ENCODE measurements at regions of chr1 and their contacts with region 1.

Region 1: GRCh38 chr1:151443846-151444782 is 15.2 kb downstream of the POGZ start:
- DNase-seq: no peak
- H3K4me3 ChIP-seq: no peak overlapping the region
- H3K27ac ChIP-seq: peak overlapping the region in 3 of 4 donors; percentile 44 to 57 (median 51)
- H3K4me1 ChIP-seq: peaks cover 0 to 65% (median 46%) of the 10 kb centered on the region in 4 donors
- H3K27me3 ChIP-seq: no peaks in the 10 kb centered on the region
- CTCF ChIP-seq: peak; percentile 27 to 74 (median 59)
- EP300 ChIP-seq: no peak
- POLR2A ChIP-seq: no peak

Region 2: GRCh38 chr1:151367658-151368392 is 76.3 kb before region 1 on chr1:
- intact Hi-C with region 1: no loop called
- DNase-seq: no peak
- H3K4me3 ChIP-seq: no peak overlapping the region
- H3K27ac ChIP-seq: peak overlapping the region in 1 of 4 donors; percentile 43
- H3K4me1 ChIP-seq: peaks cover 0 to 43% (median 32%) of the 10 kb centered on the region in 4 donors
- H3K27me3 ChIP-seq: no peaks in the 10 kb centered on the region
- CTCF ChIP-seq: no peak
- EP300 ChIP-seq: no peak
- POLR2A ChIP-seq: no peak

Region 3: GRCh38 chr1:151510957-151511635 is 67.0 kb after region 1 on chr1 and contains the start of gene CGN:
- intact Hi-C with region 1: loop called (anchors 2 kb)
- DNase-seq: peak; percentile 92
- H3K4me3 ChIP-seq: peak within 1 kb of the TSS; percentile 54 to 73 (median 63)
- H3K27ac ChIP-seq: peak within 1 kb of the TSS; percentile 59 to 84 (median 82)
- H3K4me1 ChIP-seq: peaks cover 0 to 17% (median 12%) of the 10 kb centered on the region in 4 donors
- H3K27me3 ChIP-seq: no peaks in the 10 kb centered on the region
- CTCF ChIP-seq: no peak
- EP300 ChIP-seq: no peak
- POLR2A ChIP-seq: peak in 1 of 2 donors; percentile 46
- total RNA-seq, gene CGN: 0.33 to 1.8 (median 0.62) TPM

Region 4: DNA sequence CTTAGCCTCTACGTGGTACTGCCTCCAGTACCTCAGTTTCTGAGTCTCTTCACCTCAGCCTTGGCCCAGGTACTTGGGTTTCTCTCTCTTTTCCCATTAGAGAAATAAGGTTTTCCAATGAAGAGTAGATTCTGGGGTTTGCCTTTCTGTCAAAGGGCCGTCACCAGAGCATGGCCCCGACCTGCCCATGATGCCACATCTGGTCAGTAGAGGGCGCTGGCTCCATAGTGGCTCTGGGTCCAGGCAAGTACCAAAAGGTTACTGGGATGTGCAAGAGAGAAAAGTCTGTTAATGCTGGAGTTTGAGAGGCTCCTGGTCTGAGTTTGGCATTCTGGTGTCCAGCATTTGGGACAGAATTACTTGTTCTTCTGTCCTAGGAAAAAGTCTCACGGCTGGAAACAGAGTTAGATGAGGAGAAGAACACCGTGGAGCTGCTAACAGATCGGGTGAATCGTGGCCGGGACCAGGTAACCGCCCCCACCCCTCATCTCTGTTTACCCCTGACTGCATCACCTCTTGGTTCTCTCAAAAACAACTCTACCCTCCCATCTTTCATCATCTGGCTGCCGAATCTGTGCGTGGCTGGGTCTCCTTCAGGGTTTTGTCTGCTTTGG is 90.7 kb after region 1 on chr1:
- intact Hi-C with region 1: loop called (anchors 2 kb)
- DNase-seq: peak; percentile 82
- H3K4me3 ChIP-seq: no peak overlapping the region
- H3K27ac ChIP-seq: no peak overlapping the region
- H3K4me1 ChIP-seq: peaks cover 0 to 7% (median 6%) of the 10 kb centered on the region in 4 donors
- H3K27me3 ChIP-seq: no peaks in the 10 kb centered on the region
- CTCF ChIP-seq: peak; percentile 52 to 82 (median 80)
- EP300 ChIP-seq: no peak
- POLR2A ChIP-seq: no peak

Region 5: GRCh38 chr1:151728151-151729054 is 284.3 kb after region 1 on chr1:
- intact Hi-C with region 1: loop called (anchors 5 kb)
- DNase-seq: peak; percentile 84
- H3K4me3 ChIP-seq: peak overlapping the region in 3 of 4 donors; percentile 1 to 32 (median 24)
- H3K27ac ChIP-seq: peak overlapping the region; percentile 65 to 85 (median 78)
- H3K4me1 ChIP-seq: peaks cover 0 to 14% (median 7%) of the 10 kb centered on the region in 4 donors
- H3K27me3 ChIP-seq: no peaks in the 10 kb centered on the region
- CTCF ChIP-seq: no peak
- EP300 ChIP-seq: peak in 1 of 4 donors; percentile 8
- POLR2A ChIP-seq: no peak

Measured in sigmoid colon (tissue), 7 donors.